Caco-2 (cell line): ENCODE measurements at regions of chr4 and their contacts with region 1.

Region 1: GRCh38 chr4:184250795-184251669 is 33.4 kb upstream of the ENPP6 start:
- DNase-seq: peak in 1 of 2 experiments; percentile 53
- H3K4me3 ChIP-seq: no peak overlapping the region
- H3K4me3 Mint-ChIP-seq: no peak overlapping the region
- H3K27ac Mint-ChIP-seq: no peak overlapping the region
- H3K4me1 ChIP-seq: no peaks in the 10 kb centered on the region
- H3K4me1 Mint-ChIP-seq: no peaks in the 10 kb centered on the region
- H3K27me3 ChIP-seq: no peaks in the 10 kb centered on the region
- H3K27me3 Mint-ChIP-seq: no peaks in the 10 kb centered on the region
- CTCF ChIP-seq: peak; percentile 43 to 54

Region 2: GRCh38 chr4:183840311-183840710 is 410.7 kb before region 1 on chr4:
- CTCF ChIA-PET with region 1: no interaction called
- POLR2A ChIA-PET with region 1: no interaction called
- intact Hi-C with region 1: loop called (anchors 1 kb)
- DNase-seq: peak; percentile 70 to 81
- H3K4me3 ChIP-seq: no peak overlapping the region
- H3K4me3 Mint-ChIP-seq: no peak overlapping the region
- H3K27ac Mint-ChIP-seq: no peak overlapping the region
- H3K4me1 ChIP-seq: no peaks in the 10 kb centered on the region
- H3K4me1 Mint-ChIP-seq: no peaks in the 10 kb centered on the region
- H3K27me3 ChIP-seq: no peaks in the 10 kb centered on the region
- H3K27me3 Mint-ChIP-seq: peaks cover 3% of the 10 kb centered on the region
- CTCF ChIP-seq: peak; percentile 71 to 83

Region 3: GRCh38 chr4:184205243-184205642 is 45.8 kb before region 1 on chr4:
- CTCF ChIA-PET with region 1: no interaction called
- POLR2A ChIA-PET with region 1: no interaction called
- intact Hi-C with region 1: no loop called
- DNase-seq: no peak
- H3K4me3 ChIP-seq: no peak overlapping the region
- H3K4me3 Mint-ChIP-seq: no peak overlapping the region
- H3K27ac Mint-ChIP-seq: no peak overlapping the region
- H3K4me1 ChIP-seq: peaks cover 6% of the 10 kb centered on the region; the same call in 1 of the 2 replicates
- H3K4me1 Mint-ChIP-seq: peaks cover 18% of the 10 kb centered on the region
- H3K27me3 ChIP-seq: no peaks in the 10 kb centered on the region
- H3K27me3 Mint-ChIP-seq: no peaks in the 10 kb centered on the region
- CTCF ChIP-seq: no peak

Region 4: GRCh38 chr4:184237612-184238011 is 13.4 kb before region 1 on chr4:
- CTCF ChIA-PET with region 1: no interaction called
- POLR2A ChIA-PET with region 1: no interaction called
- intact Hi-C with region 1: no loop called
- DNase-seq: no peak
- H3K4me3 ChIP-seq: no peak overlapping the region
- H3K4me3 Mint-ChIP-seq: no peak overlapping the region
- H3K27ac Mint-ChIP-seq: no peak overlapping the region
- H3K4me1 ChIP-seq: 0 out of 2 replicates have a peak, but pooled peaks cover 5% of the 10 kb centered on the region
- H3K4me1 Mint-ChIP-seq: no peaks in the 10 kb centered on the region
- H3K27me3 ChIP-seq: no peaks in the 10 kb centered on the region
- H3K27me3 Mint-ChIP-seq: no peaks in the 10 kb centered on the region
- CTCF ChIP-seq: no peak

Region 5: GRCh38 chr4:184408021-184408710 is 157.1 kb after region 1 on chr4:
- CTCF ChIA-PET with region 1: no interaction called
- POLR2A ChIA-PET with region 1: no interaction called
- intact Hi-C with region 1: no loop called
- DNase-seq: no peak
- H3K4me3 ChIP-seq: no peak overlapping the region
- H3K4me3 Mint-ChIP-seq: no peak overlapping the region
- H3K27ac Mint-ChIP-seq: no peak overlapping the region
- H3K4me1 ChIP-seq: no peaks in the 10 kb centered on the region
- H3K4me1 Mint-ChIP-seq: no peaks in the 10 kb centered on the region
- H3K27me3 ChIP-seq: no peaks in the 10 kb centered on the region
- H3K27me3 Mint-ChIP-seq: no peaks in the 10 kb centered on the region
- CTCF ChIP-seq: no peak